PC-3 (cell line): ENCODE measurements at regions of chr5 and their contacts with region 1.

Region 1: GRCh38 chr5:157253547-157253946 is 12.4 kb upstream of the CYFIP2 start:
- DNase-seq: peak; percentile 93
- ATAC-seq: peak; percentile 91
- H3K4me3 ChIP-seq: no peak overlapping the region
- H3K27ac ChIP-seq: no peak overlapping the region
- H3K4me1 ChIP-seq: no peaks in the 10 kb centered on the region
- H3K27me3 ChIP-seq: peaks cover 23% of the 10 kb centered on the region
- CTCF ChIP-seq: peak; percentile 99

Region 2: DNA sequence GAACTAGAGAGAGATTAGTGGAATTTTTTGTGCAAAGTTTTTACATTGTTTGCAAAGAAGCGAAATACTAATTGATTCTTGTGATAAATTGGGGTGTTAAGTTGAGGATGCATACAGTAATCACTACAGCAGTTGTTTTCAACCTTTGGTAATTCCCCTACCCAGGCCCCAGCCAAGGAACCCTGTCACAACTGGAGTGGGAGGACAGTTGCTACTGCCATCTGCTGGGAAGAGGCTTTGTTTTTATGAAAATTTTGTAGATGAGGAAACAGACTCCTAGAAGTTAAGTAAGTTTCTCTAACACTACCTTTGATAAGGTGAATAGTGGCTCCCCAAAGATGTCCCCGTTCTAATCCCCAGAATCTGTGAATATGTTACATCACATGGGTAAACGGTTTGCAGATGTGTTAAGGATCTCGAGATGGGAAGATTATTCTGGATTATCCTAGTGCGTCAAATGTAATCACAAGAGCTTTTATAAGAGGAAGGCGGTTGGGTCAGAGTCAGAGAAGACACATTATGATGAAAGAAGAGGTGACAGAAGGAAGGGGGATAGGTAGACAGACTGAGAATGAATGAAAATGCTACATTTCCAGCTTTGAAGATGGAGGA is 437.5 kb before region 1 on chr5:
- CTCF ChIA-PET with region 1: no interaction called
- POLR2A ChIA-PET with region 1: no interaction called
- intact Hi-C with region 1: loop called (anchors 1 kb)
- DNase-seq: peak; percentile 63
- ATAC-seq: peak; percentile 68
- H3K4me3 ChIP-seq: no peak overlapping the region
- H3K27ac ChIP-seq: no peak overlapping the region
- H3K4me1 ChIP-seq: no peaks in the 10 kb centered on the region
- H3K27me3 ChIP-seq: no peaks in the 10 kb centered on the region
- CTCF ChIP-seq: peak; percentile 71

Region 3: DNA sequence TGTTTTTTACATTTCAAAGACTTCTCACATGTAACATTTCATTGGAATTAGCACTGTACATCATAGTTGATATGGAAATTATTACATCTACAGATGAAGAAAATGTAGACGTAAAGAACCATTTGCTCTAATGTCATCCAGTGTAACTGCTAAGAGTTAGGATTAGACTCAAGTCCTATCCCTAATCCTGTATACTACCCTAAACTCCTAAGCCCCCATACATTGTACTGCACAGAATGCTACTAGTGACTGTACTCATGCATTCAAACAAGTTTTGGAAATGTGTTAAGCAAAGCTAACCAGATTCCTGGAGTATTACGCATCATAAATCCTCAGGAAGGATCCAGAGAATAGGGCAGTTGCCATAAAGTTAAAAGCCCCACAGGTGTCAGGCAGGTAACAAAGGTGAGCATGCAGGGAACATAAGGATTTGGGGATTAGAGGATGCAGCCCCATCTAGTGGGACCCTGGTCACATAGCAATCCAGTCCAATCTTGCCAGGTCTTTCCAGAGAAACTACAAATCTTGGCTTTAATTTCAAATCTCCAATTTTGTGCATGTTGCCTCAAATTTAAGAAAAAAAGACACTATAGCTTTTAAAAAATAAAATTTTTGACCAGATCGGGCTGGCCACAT is 226.6 kb before region 1 on chr5:
- CTCF ChIA-PET with region 1: no interaction called
- POLR2A ChIA-PET with region 1: no interaction called
- intact Hi-C with region 1: loop called (anchors 5 kb)
- DNase-seq: peak; percentile 85
- ATAC-seq: peak; percentile 47
- H3K4me3 ChIP-seq: no peak overlapping the region
- H3K27ac ChIP-seq: no peak overlapping the region
- H3K4me1 ChIP-seq: peaks cover 30% of the 10 kb centered on the region
- H3K27me3 ChIP-seq: peaks cover 31% of the 10 kb centered on the region
- CTCF ChIP-seq: peak; percentile 88

Region 4: GRCh38 chr5:157076558-157076957 is 177.0 kb before region 1 on chr5:
- CTCF ChIA-PET with region 1: no interaction called
- POLR2A ChIA-PET with region 1: no interaction called
- intact Hi-C with region 1: no loop called
- DNase-seq: peak; percentile 49
- ATAC-seq: peak; percentile 69
- H3K4me3 ChIP-seq: no peak overlapping the region
- H3K27ac ChIP-seq: no peak overlapping the region
- H3K4me1 ChIP-seq: peaks cover 15% of the 10 kb centered on the region
- H3K27me3 ChIP-seq: no peaks in the 10 kb centered on the region
- CTCF ChIP-seq: no peak

Region 5: DNA sequence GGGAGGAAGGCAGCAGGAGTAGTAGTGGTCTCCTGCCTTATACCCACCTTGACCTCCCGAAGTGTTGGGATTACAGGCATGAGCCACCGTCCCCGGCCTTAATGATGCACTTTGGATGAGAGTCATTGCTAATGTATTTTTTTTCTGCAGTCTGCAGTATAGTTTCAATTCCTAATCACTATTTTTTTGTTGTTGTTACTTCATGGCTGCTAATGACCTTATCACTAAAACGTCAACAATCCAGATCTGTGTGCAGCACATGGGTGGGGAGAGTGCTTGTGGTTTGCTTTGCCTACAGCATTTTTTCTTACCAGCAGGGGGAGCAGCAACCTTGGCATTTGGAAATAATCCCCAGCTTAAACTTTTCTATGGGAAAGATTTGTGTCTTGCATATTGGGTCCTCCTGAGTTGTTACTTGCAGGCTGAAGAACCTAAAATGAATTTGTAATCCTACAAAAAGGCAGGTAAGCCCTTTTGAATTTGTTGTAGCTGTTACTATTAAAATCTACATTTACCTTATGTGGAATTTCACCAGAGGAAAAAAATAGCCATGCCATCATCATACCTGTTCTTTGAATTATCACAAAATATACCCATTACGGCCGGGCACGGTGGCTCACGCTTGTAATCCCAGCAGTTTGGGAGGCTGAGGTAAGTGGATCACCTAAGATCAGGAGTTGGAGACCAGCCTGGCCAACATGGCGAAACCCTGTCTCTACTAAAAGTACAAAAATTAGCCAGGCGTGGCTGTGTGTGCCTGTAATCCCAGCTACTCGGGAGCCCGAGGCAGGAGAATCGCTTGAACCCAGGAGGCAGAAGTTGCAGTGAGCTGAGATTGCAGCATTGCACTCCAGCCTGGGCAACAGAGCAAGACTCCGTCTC is 104.6 kb before region 1 on chr5:
- CTCF ChIA-PET with region 1: interaction called, 4 read pairs
- POLR2A ChIA-PET with region 1: no interaction called
- intact Hi-C with region 1: loop called (anchors 5 kb)
- DNase-seq: peak; percentile 95
- ATAC-seq: peak; percentile 95
- H3K4me3 ChIP-seq: no peak overlapping the region
- H3K27ac ChIP-seq: no peak overlapping the region
- H3K4me1 ChIP-seq: no peaks in the 10 kb centered on the region
- H3K27me3 ChIP-seq: peaks cover 11% of the 10 kb centered on the region; the same call in 1 of the 2 replicates
- CTCF ChIP-seq: peak; percentile 99

Region 6: DNA sequence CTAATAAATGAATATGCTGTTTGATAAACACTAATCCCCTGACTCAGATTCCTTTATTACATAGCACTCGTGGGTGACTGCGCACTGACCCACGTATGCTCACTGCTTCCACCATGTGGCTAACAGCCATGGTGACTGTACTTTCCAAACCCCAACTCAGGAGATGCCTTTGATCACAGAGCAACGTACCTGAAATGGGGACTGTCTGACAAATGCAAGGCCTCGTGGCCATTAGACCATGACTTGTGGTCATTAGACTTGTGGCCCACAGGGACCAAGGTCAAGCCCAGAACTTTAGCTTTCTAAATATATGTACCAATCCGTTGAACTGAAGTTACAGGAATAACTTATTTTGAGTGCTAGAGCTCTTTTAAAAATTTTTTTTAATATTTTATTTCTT is 58.9 kb after region 1 on chr5:
- CTCF ChIA-PET with region 1: interaction called, 6 read pairs
- POLR2A ChIA-PET with region 1: no interaction called
- intact Hi-C with region 1: loop called (anchors 1 kb)
- DNase-seq: peak; percentile 92
- ATAC-seq: peak; percentile 97
- H3K4me3 ChIP-seq: no peak overlapping the region
- H3K27ac ChIP-seq: no peak overlapping the region
- H3K4me1 ChIP-seq: no peaks in the 10 kb centered on the region
- H3K27me3 ChIP-seq: no peaks in the 10 kb centered on the region
- CTCF ChIP-seq: peak; percentile 98

Region 7: GRCh38 chr5:157476702-157477408 is 223.3 kb after region 1 on chr5:
- CTCF ChIA-PET with region 1: no interaction called
- POLR2A ChIA-PET with region 1: no interaction called
- intact Hi-C with region 1: loop called (anchors 1 kb)
- DNase-seq: peak; percentile 91
- ATAC-seq: peak; percentile 41
- H3K4me3 ChIP-seq: no peak overlapping the region
- H3K27ac ChIP-seq: no peak overlapping the region
- H3K4me1 ChIP-seq: peaks cover 36% of the 10 kb centered on the region
- H3K27me3 ChIP-seq: no peaks in the 10 kb centered on the region
- CTCF ChIP-seq: peak; percentile 99

Region 8: DNA sequence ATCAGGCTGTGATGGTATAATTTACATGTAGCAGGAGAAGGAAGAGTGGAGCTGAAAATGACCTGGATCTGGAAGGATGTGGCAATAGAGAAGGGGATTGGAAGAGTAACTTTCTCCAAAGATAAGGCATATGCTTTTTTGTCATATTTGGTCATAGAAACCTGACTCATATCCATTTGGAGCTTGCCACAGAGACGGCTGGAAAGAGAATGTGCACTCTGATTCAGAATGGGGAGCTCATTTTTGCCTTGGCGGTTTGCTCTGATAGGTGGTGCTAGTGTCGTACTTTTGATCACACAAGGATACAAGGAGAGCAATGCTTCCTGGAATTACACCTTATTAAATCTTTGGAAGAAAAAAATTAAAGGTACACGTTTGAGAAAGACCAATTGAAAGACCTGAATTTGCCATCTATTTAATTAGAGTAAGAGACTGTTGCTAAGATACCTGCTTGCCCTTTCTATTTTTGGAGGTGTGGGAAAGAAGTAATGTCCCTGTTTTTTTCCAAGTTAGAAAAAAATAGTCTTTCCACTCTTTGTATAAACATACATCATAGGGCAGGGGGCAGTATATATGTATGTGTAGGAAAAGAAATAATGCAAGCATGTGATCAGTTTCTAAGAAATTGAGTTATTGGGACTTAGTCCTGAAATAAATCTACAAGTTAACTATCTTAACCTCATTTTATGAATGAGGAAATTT is 495.4 kb after region 1 on chr5:
- CTCF ChIA-PET with region 1: no interaction called
- POLR2A ChIA-PET with region 1: interaction called, 15 read pairs
- intact Hi-C with region 1: loop called (anchors 10 kb)
- DNase-seq: peak; percentile 91
- ATAC-seq: peak; percentile 70
- H3K4me3 ChIP-seq: no peak overlapping the region
- H3K27ac ChIP-seq: peak overlapping the region; percentile 19
- H3K4me1 ChIP-seq: peaks cover 43% of the 10 kb centered on the region
- H3K27me3 ChIP-seq: no peaks in the 10 kb centered on the region
- CTCF ChIP-seq: peak; percentile 70